Ascending aorta (tissue), 2 donors: ENCODE measurements at regions of chr12 and their contacts with region 1.

Region 1: GRCh38 chr12:51238510-51239334 is at the start of gene DAZAP2:
- DNase-seq: peak; percentile 85 to 97
- H3K4me3 ChIP-seq: peak within 1 kb of the TSS; percentile 74 to 96
- H3K27ac ChIP-seq: peak within 1 kb of the TSS; percentile 99
- H3K4me1 ChIP-seq: peaks cover 14 to 25% of the 10 kb centered on the region in 2 donors
- H3K27me3 ChIP-seq: no peaks in the 10 kb centered on the region
- CTCF ChIP-seq: no peak
- total RNA-seq, gene DAZAP2: 212 TPM

Region 2: DNA sequence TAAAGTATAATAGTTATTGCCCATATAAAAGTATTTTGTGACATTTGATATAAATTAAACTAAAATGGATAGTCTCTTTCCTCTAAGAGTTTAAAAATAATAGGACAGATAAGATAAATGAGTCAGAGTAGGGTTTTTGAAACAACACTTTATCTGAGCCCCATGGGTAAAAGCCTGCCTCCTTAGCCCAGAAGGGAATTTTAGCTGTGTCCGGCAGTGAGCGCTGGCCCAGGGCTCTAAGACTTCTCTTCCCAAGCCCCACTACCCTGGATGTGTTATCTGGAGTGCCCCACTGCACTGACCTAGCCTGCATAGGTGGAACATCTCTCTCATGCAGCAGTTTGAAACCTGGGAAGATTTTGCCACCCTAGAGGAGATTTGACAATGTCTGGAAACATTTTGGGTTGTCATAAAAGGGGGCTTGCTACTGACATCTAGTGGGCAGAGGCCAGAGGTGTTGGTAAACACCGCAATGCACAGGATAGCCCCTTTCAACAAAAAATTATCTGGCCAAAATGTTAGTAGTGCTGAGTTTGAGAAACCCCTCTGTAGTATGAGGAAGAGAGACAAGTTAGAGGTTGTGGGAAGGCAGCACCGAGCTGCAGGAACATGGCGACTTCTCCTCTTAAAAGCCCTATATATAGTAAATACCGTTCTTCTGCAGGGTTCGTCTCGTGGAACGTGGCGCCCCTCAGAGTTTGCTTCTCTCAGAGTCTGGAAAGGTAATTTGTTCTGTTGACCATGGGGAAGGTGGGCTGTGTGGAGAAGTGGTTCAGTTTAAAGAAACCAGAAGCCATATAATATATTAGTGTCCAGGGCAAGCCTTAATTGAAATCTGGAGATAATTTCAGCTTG is 504.1 kb before region 1 on chr12:
- intact Hi-C with region 1: no loop called
- DNase-seq: no peak
- H3K4me3 ChIP-seq: no peak overlapping the region
- H3K27ac ChIP-seq: no peak overlapping the region
- H3K4me1 ChIP-seq: no peaks in the 10 kb centered on the region
- H3K27me3 ChIP-seq: no peaks in the 10 kb centered on the region
- CTCF ChIP-seq: peak in 2 of 3 experiments; percentile 35 to 49

Region 3: DNA sequence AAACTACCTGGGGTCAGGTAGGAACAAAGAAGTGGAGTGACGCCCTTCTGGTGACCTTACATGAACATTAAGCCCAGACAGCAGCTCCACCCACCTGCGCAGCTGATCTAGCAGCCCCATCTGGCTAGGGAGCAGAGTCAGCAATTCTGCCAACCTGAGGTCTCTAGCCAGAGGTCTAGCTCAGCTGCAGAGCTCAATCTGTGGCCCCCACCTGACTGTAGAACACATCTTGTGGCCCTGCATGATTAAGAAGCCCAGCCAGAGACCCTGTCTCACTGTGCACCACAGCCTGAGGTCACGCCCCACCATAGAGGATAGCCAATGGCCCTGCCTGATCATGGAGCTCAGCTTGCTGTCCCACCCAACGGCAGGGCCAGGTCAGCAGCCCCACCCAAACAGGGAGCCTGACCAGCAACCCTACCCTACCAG is 337.0 kb before region 1 on chr12:
- intact Hi-C with region 1: no loop called
- DNase-seq: no peak
- H3K4me3 ChIP-seq: no peak overlapping the region
- H3K27ac ChIP-seq: no peak overlapping the region
- H3K4me1 ChIP-seq: no peaks in the 10 kb centered on the region
- H3K27me3 ChIP-seq: no peaks in the 10 kb centered on the region
- CTCF ChIP-seq: no peak

Region 4: DNA sequence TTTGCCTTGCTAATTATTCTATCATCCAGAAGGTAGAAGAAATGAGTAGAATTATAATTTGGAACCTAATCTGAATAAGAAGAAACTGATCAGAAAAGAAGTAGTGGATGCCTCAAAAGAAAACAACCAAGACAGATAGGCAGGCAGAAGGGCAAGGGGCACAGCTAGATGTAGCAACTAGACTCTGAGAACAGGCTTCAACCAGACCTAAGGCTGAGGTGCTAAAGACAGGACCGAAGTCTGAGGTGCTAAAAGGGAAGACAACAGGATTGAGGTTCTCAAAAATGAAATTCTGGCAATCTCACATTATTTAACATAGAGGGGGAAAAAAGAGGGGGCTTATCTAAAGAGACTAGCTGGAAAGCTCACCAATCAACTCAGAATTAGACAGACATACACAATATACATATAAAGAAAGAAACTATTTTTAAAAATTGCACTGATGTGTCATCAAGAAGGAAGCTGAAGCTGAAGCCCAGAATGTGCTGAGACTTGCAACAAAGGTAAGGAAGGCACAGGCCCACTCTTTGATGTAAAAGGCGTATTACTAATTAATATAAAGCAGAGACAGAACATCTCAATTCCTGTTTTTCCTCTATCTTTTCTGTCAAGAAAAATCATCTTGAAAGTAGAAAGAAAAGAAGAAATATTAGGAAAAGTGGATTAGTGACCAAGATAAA is 111.5 kb before region 1 on chr12:
- intact Hi-C with region 1: no loop called
- DNase-seq: no peak
- H3K4me3 ChIP-seq: no peak overlapping the region
- H3K27ac ChIP-seq: no peak overlapping the region
- H3K4me1 ChIP-seq: no peaks in the 10 kb centered on the region
- H3K27me3 ChIP-seq: no peaks in the 10 kb centered on the region
- CTCF ChIP-seq: no peak

Region 5: GRCh38 chr12:51172515-51173431 is 65.9 kb before region 1 on chr12 and contains the start of gene TFCP2:
- intact Hi-C with region 1: loop called (anchors 1 kb)
- DNase-seq: peak; percentile 91 to 98
- H3K4me3 ChIP-seq: peak within 1 kb of the TSS; percentile 85 to 94
- H3K27ac ChIP-seq: peak within 1 kb of the TSS; percentile 91 to 100
- H3K4me1 ChIP-seq: peaks cover 6% of the 10 kb centered on the region in 2 donors
- H3K27me3 ChIP-seq: no peaks in the 10 kb centered on the region
- CTCF ChIP-seq: no peak
- total RNA-seq, gene TFCP2: 3.0 TPM